Endothelial cell of umbilical vein (primary cell): ENCODE measurements at regions of chr11 and their contacts with region 1.

Region 1: GRCh38 chr11:128831174-128832120 is 35.6 kb downstream of the KCNJ1 start:
- DNase-seq: peak; percentile 87
- H3K4me3 ChIP-seq: no peak overlapping the region
- H3K27ac ChIP-seq: peak overlapping the region; percentile 47
- H3K4me1 ChIP-seq: peaks cover 65% of the 10 kb centered on the region
- H3K27me3 ChIP-seq: no peaks in the 10 kb centered on the region
- CTCF ChIP-seq: peak; percentile 81 to 84
- POLR2A ChIP-seq: no peak

Region 2: DNA sequence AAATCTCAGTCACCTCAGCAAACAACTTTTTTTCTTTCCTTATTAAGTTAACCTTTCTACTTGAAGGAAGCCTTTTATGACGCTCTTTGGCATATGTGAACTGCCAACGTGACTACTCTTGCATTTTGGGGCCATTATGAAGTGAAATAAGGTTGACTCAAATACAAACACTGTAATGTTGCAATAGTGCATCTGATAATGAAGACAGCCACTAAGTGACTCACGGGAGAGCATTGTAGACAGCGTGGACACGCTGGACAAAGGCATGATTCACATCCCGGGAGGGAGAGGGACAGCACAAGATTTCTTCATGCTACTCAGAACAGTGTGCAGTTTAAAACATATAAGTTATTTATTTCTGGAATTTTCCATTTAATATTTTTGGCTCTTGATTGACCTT is 804.9 kb before region 1 on chr11:
- CTCF ChIA-PET with region 1: interaction called, 3 read pairs
- POLR2A ChIA-PET with region 1: no interaction called
- dilution Hi-C with region 1: no loop called
- intact Hi-C with region 1: loop called (anchors 1 kb)
- DNase-seq: peak; percentile 81
- H3K4me3 ChIP-seq: no peak overlapping the region
- H3K27ac ChIP-seq: peak overlapping the region; percentile 39
- H3K4me1 ChIP-seq: peaks cover 25% of the 10 kb centered on the region
- H3K27me3 ChIP-seq: no peaks in the 10 kb centered on the region
- CTCF ChIP-seq: no peak
- POLR2A ChIP-seq: no peak

Region 3: DNA sequence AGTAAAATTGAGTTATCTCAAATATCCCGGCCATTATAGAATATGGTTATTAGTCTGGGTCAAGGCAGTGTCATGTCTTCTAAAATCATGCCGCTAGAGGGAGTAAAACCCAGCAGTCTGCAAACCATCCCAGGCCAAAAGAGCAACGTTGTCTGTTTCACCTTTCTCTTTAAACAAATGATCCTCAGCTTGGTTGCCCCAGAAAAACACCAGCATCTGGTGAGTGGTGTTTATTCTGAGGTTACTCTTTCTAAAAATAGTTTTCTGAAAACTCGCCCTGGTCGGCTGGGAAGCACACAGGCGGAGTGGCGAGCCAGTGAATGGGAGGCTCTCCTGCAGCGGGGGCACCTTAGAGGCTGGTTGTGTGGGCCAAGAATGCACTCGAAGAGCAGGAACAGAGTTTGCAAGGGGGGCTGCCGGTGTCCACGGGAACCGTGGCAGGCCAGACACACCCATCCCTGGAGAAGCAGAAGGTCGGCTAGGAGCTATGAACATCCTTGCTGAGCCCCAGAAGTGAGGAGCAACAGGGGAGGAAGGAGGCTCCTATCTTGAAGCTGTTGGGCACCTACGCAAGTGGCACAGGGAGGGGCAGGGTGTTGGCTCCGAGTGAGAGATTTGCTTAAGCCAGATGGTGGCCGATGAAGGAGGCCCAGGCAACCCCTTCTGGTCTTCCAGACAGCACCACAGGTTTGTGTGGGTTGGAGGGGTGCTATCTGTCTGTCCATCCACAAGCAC is 541.2 kb before region 1 on chr11:
- CTCF ChIA-PET with region 1: interaction called, 6 read pairs
- POLR2A ChIA-PET with region 1: no interaction called
- dilution Hi-C with region 1: no loop called
- intact Hi-C with region 1: loop called (anchors 1 kb)
- DNase-seq: peak; percentile 77
- H3K4me3 ChIP-seq: no peak overlapping the region
- H3K27ac ChIP-seq: no peak overlapping the region
- H3K4me1 ChIP-seq: no peaks in the 10 kb centered on the region
- H3K27me3 ChIP-seq: no peaks in the 10 kb centered on the region
- CTCF ChIP-seq: peak; percentile 71 to 72
- POLR2A ChIP-seq: no peak

Region 4: GRCh38 chr11:128695539-128696221 is 135.8 kb before region 1 on chr11:
- CTCF ChIA-PET with region 1: interaction called, 3 read pairs
- POLR2A ChIA-PET with region 1: no interaction called
- dilution Hi-C with region 1: no loop called
- intact Hi-C with region 1: loop called (anchors 1 kb)
- DNase-seq: no peak
- H3K4me3 ChIP-seq: peak overlapping the region; percentile 56 to 94 (median 92)
- H3K27ac ChIP-seq: peak overlapping the region; percentile 98
- H3K4me1 ChIP-seq: peaks cover 66% of the 10 kb centered on the region
- H3K27me3 ChIP-seq: no peaks in the 10 kb centered on the region
- CTCF ChIP-seq: no peak
- POLR2A ChIP-seq: peak; percentile 35

Region 5: DNA sequence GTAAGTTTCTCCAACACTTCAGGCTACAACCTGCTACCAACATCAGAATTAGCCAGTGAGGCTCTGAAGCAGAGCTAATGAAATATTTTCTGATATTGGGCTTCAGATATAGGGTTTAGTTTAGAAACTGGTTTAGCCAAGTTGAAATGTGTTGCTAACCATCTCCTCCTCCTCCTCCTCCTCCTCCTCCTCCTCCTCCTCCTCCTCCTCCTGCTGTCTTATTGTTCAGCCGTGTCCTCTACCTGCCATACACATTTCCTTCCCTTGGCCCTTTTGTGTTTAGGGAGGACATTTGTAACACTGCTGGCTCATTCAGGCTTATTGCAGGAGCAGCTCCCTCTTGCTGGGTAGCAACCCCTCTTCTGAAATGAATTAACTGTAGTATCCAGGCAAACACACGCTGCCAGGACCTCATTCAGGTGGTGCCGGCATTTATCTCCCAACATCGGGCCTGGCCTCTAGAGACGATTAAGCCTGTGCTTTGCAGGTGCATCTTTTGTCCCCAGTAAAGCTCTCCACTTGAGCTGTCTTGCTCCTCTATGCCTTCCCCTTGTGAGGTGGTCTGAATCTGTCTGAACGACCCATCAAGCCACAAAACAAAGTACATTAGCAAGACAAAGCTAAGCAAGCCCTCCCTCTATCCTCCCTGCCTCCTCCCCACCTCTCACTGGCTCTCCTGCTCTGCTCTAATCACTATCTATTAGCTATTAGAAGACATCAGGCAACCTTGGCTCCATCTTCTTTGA is 47.2 kb before region 1 on chr11:
- CTCF ChIA-PET with region 1: interaction called, 16 read pairs
- POLR2A ChIA-PET with region 1: no interaction called
- dilution Hi-C with region 1: no loop called
- intact Hi-C with region 1: no loop called
- DNase-seq: no peak
- H3K4me3 ChIP-seq: no peak overlapping the region
- H3K27ac ChIP-seq: no peak overlapping the region
- H3K4me1 ChIP-seq: no peaks in the 10 kb centered on the region
- H3K27me3 ChIP-seq: no peaks in the 10 kb centered on the region
- CTCF ChIP-seq: no peak
- POLR2A ChIP-seq: no peak

Region 6: DNA sequence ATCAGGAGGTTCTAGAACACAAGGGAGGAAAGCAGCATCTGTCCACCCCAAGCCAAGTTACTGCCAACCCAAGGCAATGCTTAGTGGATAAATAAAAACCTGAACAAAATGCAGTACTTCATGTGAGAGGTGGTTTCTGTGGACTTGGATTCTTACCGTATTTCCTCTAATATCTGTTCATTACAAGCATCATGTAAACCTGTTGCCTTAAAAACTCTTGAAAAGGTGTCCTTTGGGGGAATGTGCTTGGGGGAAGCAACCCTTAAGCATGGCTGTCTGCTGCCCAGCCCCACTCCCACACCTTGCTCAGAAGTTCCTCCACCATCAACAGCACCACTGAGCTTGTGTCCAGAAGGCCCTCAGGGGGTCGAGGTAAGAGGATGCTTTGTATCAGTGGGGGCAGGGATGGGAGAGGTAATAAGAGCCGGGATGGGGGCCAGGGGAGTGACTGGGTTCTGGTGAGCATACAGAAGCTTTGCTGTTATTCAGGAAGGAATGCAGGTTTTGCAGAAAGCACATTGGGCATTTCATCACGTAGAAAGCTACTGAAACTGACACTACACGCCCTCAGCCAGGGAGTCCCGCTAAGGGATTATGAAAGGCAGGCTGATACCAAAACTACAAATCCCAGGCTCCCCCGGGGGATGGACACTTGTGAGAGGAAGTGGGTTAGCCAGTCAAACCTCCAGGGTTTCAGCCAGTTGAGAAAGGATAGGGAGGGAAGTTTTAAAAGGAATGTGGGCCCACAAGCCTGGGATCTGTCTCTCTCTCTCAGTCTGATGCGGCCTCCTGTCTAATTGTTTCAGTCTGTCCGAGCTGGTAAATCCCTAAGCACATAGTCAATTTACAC is 16.4 kb before region 1 on chr11:
- CTCF ChIA-PET with region 1: interaction called, 20 read pairs
- POLR2A ChIA-PET with region 1: no interaction called
- dilution Hi-C with region 1: no loop called
- intact Hi-C with region 1: no loop called
- DNase-seq: no peak
- H3K4me3 ChIP-seq: no peak overlapping the region
- H3K27ac ChIP-seq: no peak overlapping the region
- H3K4me1 ChIP-seq: no peaks in the 10 kb centered on the region
- H3K27me3 ChIP-seq: no peaks in the 10 kb centered on the region
- CTCF ChIP-seq: no peak
- POLR2A ChIP-seq: no peak